Activated B cell treated with CpG ODN at 0.5 μM for 24 hours (primary cell): ENCODE measurements at regions of chr3 and their contacts with region 1.

Region 1: GRCh38 chr3:188439080-188439479 is 285.1 kb downstream of the LPP start:
- DNase-seq: no peak
- ATAC-seq: peak; percentile 85
- H3K4me3 Mint-ChIP-seq: peak overlapping the region; percentile 52
- H3K27ac Mint-ChIP-seq: peak overlapping the region; percentile 88
- H3K4me1 Mint-ChIP-seq: peaks cover 95% of the 10 kb centered on the region
- H3K27me3 Mint-ChIP-seq: no peaks in the 10 kb centered on the region
- CTCF ChIP-seq: no peak

Region 2: GRCh38 chr3:188026191-188026968 is 412.7 kb before region 1 on chr3:
- CTCF ChIA-PET with region 1: no interaction called
- POLR2A ChIA-PET with region 1: no interaction called
- intact Hi-C with region 1: no loop called
- DNase-seq: no peak
- ATAC-seq: no peak
- H3K4me3 Mint-ChIP-seq: no peak overlapping the region
- H3K27ac Mint-ChIP-seq: no peak overlapping the region
- H3K4me1 Mint-ChIP-seq: peaks cover 2% of the 10 kb centered on the region
- H3K27me3 Mint-ChIP-seq: no peaks in the 10 kb centered on the region
- CTCF ChIP-seq: no peak

Region 3: DNA sequence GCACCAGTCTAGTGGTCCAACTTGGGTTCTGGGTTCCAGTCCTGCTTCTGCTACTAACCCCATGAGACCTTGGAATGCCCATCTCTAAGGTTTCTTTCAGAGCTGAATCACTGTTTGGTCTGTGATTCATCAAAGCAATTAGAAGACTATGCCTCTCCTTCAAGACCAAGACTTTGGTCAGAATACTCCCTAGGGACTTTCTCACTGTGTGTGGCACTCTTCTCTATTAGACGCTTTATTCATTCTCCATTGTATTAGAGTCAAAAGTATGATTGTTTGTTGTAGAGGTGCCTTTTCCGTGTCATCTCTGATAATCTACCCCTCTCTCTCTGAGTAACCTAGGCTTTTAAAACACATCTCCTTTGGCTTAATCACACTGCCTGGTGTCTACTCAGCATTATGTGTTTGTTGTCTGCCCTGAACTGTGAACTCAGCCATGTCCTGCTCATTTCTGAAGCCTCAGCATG is 194.7 kb before region 1 on chr3:
- CTCF ChIA-PET with region 1: no interaction called
- POLR2A ChIA-PET with region 1: no interaction called
- intact Hi-C with region 1: loop called (anchors 2 kb)
- DNase-seq: no peak
- ATAC-seq: peak; percentile 78
- H3K4me3 Mint-ChIP-seq: peak overlapping the region; percentile 24
- H3K27ac Mint-ChIP-seq: peak overlapping the region; percentile 62
- H3K4me1 Mint-ChIP-seq: peaks cover 74% of the 10 kb centered on the region
- H3K27me3 Mint-ChIP-seq: no peaks in the 10 kb centered on the region
- CTCF ChIP-seq: no peak

Region 4: GRCh38 chr3:188309437-188310269 is 129.4 kb before region 1 on chr3:
- CTCF ChIA-PET with region 1: no interaction called
- POLR2A ChIA-PET with region 1: interaction called, 14 read pairs
- intact Hi-C with region 1: loop called (anchors 5 kb)
- DNase-seq: no peak
- ATAC-seq: peak; percentile 78
- H3K4me3 Mint-ChIP-seq: peak overlapping the region; percentile 72
- H3K27ac Mint-ChIP-seq: peak overlapping the region; percentile 91
- H3K4me1 Mint-ChIP-seq: peaks cover 39% of the 10 kb centered on the region
- H3K27me3 Mint-ChIP-seq: no peaks in the 10 kb centered on the region
- CTCF ChIP-seq: no peak

Region 5: GRCh38 chr3:188400494-188401243 is 38.4 kb before region 1 on chr3:
- CTCF ChIA-PET with region 1: interaction called, 9 read pairs
- POLR2A ChIA-PET with region 1: interaction called, 27 read pairs
- intact Hi-C with region 1: loop called (anchors 1 kb)
- DNase-seq: no peak
- ATAC-seq: peak; percentile 82
- H3K4me3 Mint-ChIP-seq: peak overlapping the region; percentile 56
- H3K27ac Mint-ChIP-seq: peak overlapping the region; percentile 91
- H3K4me1 Mint-ChIP-seq: peaks cover 93% of the 10 kb centered on the region
- H3K27me3 Mint-ChIP-seq: no peaks in the 10 kb centered on the region
- CTCF ChIP-seq: no peak

Region 6: GRCh38 chr3:188452158-188452772 is 13.2 kb after region 1 on chr3:
- CTCF ChIA-PET with region 1: interaction called, 3 read pairs
- POLR2A ChIA-PET with region 1: interaction called, 11 read pairs
- intact Hi-C with region 1: loop called (anchors 1 kb)
- DNase-seq: no peak
- ATAC-seq: no peak
- H3K4me3 Mint-ChIP-seq: no peak overlapping the region
- H3K27ac Mint-ChIP-seq: peak overlapping the region; percentile 41
- H3K4me1 Mint-ChIP-seq: peaks cover 59% of the 10 kb centered on the region
- H3K27me3 Mint-ChIP-seq: no peaks in the 10 kb centered on the region
- CTCF ChIP-seq: no peak

Region 7: GRCh38 chr3:188607805-188608315 is 168.8 kb after region 1 on chr3:
- CTCF ChIA-PET with region 1: no interaction called
- POLR2A ChIA-PET with region 1: no interaction called
- intact Hi-C with region 1: no loop called
- DNase-seq: no peak
- ATAC-seq: no peak
- H3K4me3 Mint-ChIP-seq: no peak overlapping the region
- H3K27ac Mint-ChIP-seq: peak overlapping the region; percentile 59
- H3K4me1 Mint-ChIP-seq: peaks cover 22% of the 10 kb centered on the region
- H3K27me3 Mint-ChIP-seq: no peaks in the 10 kb centered on the region
- CTCF ChIP-seq: no peak

Region 8: GRCh38 chr3:188697127-188697526 is 258.0 kb after region 1 on chr3:
- CTCF ChIA-PET with region 1: no interaction called
- POLR2A ChIA-PET with region 1: no interaction called
- intact Hi-C with region 1: loop called (anchors 2 kb)
- DNase-seq: no peak
- ATAC-seq: peak; percentile 80
- H3K4me3 Mint-ChIP-seq: peak overlapping the region; percentile 20
- H3K27ac Mint-ChIP-seq: peak overlapping the region; percentile 86
- H3K4me1 Mint-ChIP-seq: peaks cover 72% of the 10 kb centered on the region
- H3K27me3 Mint-ChIP-seq: no peaks in the 10 kb centered on the region
- CTCF ChIP-seq: no peak

Region 9: DNA sequence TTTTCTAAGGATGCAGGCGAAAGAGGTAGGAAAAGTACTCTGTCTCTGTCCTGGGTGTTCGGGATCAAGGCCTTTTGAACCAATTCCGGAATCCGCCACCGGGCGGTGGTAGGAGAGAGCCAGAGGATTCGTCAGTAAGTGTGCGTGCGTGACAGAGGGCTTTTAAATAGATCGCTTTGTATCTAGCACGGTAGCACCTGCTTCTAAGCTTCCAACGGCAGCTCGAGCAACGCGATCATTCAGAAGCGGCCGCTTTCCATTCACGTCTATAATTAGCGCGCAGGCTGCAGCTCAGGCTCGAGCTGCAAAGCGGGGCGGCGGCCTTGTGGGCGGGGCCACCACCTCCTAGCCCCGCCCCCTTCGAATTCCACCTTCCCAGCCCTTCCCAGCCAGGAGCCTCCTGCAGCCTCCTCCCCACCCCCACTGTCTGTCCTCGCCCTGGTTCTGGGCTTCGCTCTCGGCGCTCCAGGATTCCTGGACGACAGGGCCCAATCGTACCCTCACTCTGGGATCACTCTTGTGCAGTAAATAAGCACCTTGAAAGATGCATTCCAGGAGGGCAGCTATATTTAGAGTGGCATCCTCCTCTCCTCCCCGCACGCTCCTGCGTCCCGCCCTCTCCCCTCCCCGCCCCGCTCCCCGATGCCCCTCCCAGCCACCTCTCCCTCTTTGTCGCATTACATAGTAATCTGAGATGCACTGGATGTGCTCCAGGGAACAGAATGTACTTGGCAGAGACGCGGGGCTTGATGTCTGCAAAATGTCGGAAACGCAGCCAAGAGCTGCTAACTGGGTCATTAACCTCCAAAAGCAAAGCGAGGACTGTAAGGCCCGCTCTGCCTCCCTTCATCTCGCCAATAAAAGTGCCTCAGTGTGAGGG is 508.6 kb after region 1 on chr3:
- CTCF ChIA-PET with region 1: interaction called, 3 read pairs
- POLR2A ChIA-PET with region 1: interaction called, 5 read pairs
- intact Hi-C with region 1: loop called (anchors 2 kb)
- DNase-seq: no peak
- ATAC-seq: peak; percentile 19
- H3K4me3 Mint-ChIP-seq: peak overlapping the region; percentile 70
- H3K27ac Mint-ChIP-seq: no peak overlapping the region
- H3K4me1 Mint-ChIP-seq: peaks cover 43% of the 10 kb centered on the region
- H3K27me3 Mint-ChIP-seq: peaks cover 13% of the 10 kb centered on the region
- CTCF ChIP-seq: no peak